MCF 10A (cell line): ENCODE measurements at regions of chr3 and their contacts with region 1.

Region 1: GRCh38 chr3:12648384-12648959 is 15.4 kb downstream of the RAF1 start:
- DNase-seq: no peak
- H3K4me3 Mint-ChIP-seq: peak overlapping the region; percentile 30
- H3K27ac Mint-ChIP-seq: peak overlapping the region; percentile 90
- H3K4me1 Mint-ChIP-seq: peaks cover 11% of the 10 kb centered on the region
- H3K27me3 Mint-ChIP-seq: no peaks in the 10 kb centered on the region
- CTCF ChIP-seq: no peak

Region 2: GRCh38 chr3:12658593-12659058 is 10.2 kb after region 1 on chr3:
- CTCF ChIA-PET with region 1: interaction called, 8 read pairs
- POLR2A ChIA-PET with region 1: interaction called, 19 read pairs
- intact Hi-C with region 1: loop called (anchors 2 kb)
- DNase-seq: peak; percentile 29
- H3K4me3 Mint-ChIP-seq: no peak overlapping the region
- H3K27ac Mint-ChIP-seq: no peak overlapping the region
- H3K4me1 Mint-ChIP-seq: peaks cover 25% of the 10 kb centered on the region
- H3K27me3 Mint-ChIP-seq: no peaks in the 10 kb centered on the region
- CTCF ChIP-seq: no peak

Region 3: DNA sequence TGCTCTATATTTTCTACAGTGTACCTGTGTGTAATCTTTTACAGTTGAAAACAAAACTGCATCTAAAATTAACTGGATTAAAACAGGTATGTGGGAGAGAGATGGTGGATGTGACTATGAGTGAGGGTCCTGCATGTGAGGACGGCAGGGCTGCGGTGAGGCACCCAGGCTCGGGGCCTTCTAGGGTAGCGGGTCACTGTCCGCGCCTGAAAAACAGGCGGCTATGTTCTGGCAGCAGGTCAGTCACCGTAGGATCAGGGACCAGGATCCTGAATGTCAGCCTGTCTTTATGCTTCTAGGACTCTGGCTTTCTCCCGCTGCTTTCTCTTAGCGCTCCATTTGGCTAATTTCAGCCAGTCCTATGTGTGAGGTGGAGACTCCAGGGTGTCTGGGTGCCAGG is 97.9 kb after region 1 on chr3:
- CTCF ChIA-PET with region 1: no interaction called
- POLR2A ChIA-PET with region 1: no interaction called
- intact Hi-C with region 1: no loop called
- DNase-seq: no peak
- H3K4me3 Mint-ChIP-seq: no peak overlapping the region
- H3K27ac Mint-ChIP-seq: no peak overlapping the region
- H3K4me1 Mint-ChIP-seq: peaks cover 10% of the 10 kb centered on the region
- H3K27me3 Mint-ChIP-seq: no peaks in the 10 kb centered on the region
- CTCF ChIP-seq: no peak

Region 4: DNA sequence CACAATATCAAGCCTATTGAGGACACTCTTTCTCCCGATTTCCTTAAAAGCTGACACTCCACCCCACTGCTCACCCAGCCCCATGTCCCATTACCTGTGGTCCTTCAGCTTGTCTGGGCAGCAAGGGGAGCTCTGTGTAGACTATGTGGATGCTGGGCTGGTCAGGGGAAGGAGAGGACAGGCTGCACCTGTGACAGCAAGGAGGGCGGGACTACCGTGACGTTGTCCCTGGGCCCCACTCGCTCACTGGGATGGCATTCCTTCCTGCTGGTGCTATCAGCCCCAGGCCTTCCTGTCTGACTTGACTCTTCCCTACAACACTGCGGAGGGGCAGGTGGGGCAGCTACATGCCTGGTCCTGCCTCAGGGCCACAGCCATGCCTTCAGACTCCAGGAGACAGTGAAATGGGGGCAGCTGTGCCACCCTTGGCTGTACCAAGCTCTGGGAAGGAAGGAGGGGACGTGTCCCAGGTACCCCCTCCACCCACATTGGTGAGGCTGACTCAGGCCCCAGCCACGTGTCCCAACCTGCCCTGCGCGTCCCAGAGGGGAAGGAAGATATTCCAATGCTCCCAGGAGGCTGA is 110.7 kb after region 1 on chr3 and contains the start of gene TMEM40:
- CTCF ChIA-PET with region 1: no interaction called
- POLR2A ChIA-PET with region 1: no interaction called
- intact Hi-C with region 1: no loop called
- DNase-seq: peak; percentile 86
- H3K4me3 Mint-ChIP-seq: peak within 1 kb of the TSS; percentile 43
- H3K27ac Mint-ChIP-seq: peak within 1 kb of the TSS; percentile 74
- H3K4me1 Mint-ChIP-seq: peaks cover 49% of the 10 kb centered on the region
- H3K27me3 Mint-ChIP-seq: no peaks in the 10 kb centered on the region
- CTCF ChIP-seq: no peak
- total RNA-seq, gene TMEM40: 30.3 and 58.4 TPM in 2 replicates

Region 5: DNA sequence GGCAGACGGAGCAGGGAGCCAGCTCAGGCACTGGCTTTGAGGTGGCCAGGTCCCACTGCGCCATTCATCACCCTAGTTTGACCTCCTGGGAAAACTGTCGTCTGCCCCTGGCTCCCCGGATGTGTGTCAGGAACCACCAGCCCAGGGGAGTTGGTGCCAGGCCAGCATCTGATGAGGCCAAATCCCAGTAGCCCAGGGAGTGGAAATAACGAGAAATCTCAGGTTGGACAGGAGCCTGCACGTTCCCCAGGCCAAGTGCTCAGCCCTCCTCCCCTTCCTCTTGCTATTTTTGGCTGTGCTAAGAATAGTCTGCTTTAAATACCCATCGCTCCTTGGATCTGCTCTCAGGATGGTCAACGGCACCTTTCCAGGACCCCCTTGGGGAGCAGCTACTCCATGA is 286.0 kb after region 1 on chr3:
- CTCF ChIA-PET with region 1: no interaction called
- POLR2A ChIA-PET with region 1: no interaction called
- intact Hi-C with region 1: no loop called
- DNase-seq: no peak
- H3K4me3 Mint-ChIP-seq: no peak overlapping the region
- H3K27ac Mint-ChIP-seq: no peak overlapping the region
- H3K4me1 Mint-ChIP-seq: no peaks in the 10 kb centered on the region
- H3K27me3 Mint-ChIP-seq: no peaks in the 10 kb centered on the region
- CTCF ChIP-seq: no peak